HCT116 (cell line): ENCODE measurements at regions of chr4 and their contacts with region 1.

Region 1: DNA sequence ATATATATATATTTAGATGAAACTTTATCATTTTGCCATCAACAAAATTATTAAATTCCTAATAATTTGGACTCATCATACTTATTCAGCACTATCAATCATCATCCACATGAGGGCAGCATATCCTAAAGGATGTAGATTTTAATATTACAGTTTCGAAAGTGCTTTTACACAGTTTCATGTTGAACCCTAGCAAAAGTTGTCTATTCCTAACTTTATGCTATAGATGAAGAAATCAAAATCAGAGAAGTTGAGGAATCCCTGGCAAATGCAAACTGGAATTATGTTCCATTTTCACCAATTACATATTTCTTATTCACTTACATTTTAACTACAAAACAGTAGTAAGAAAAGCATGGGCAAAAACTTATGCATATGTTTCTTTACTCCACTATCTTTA is 36.6 kb upstream of the UGT2A1 start:
- DNase-seq: peak; percentile 6
- ATAC-seq: peak; percentile 63
- H3K4me3 ChIP-seq: no peak overlapping the region
- H3K27ac ChIP-seq: no peak overlapping the region
- H3K4me1 ChIP-seq: no peaks in the 10 kb centered on the region
- H3K27me3 ChIP-seq: no peaks in the 10 kb centered on the region
- CTCF ChIP-seq: peak; percentile 41 to 54 (median 50); a peak in 5 of 6 replicates
- POLR2A ChIP-seq: no peak
- RAD21 ChIP-seq: peak; percentile 76

Region 2: DNA sequence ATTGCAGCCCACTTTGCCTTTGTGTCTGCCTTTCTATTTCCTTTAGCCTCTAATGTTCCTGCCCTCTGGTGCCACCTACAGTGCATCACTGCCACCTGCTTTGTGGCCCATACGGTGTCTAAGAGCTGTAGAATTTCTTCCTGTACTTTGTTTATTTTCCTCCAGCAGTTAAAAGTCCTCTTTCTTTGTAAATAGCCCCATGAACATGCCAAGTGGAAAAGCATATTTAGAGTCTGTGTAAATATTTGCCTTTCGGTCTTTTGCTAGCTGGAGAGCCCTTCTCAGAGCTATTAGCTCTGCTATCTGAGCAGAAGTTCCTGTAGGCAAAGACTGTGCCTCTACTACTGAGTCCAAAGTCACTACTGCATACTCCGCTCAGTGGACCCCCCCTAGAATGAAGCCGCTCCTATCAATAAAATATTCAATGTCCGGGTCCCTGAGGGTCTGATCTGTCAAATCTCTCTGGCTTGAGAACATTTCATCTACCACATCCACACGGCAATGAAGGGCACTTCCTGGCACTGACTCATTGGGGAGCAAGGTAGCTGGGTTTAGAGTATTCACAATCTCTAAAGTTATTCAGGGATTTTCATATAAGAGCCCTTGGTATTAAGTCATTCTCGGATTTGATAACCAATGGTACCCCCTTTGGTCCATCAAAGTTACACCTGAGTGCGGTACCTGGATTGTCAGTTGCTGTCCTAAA is 134.0 kb after region 1 on chr4:
- CTCF ChIA-PET with region 1: interaction called, 3 read pairs
- POLR2A ChIA-PET with region 1: no interaction called
- RAD21 ChIA-PET with region 1: interaction called in 1 of 2 experiments, 3 read pairs
- intact Hi-C with region 1: loop called (anchors 2 kb)
- DNase-seq: peak; percentile 18
- ATAC-seq: peak; percentile 94
- H3K4me3 ChIP-seq: no peak overlapping the region
- H3K27ac ChIP-seq: no peak overlapping the region
- H3K4me1 ChIP-seq: no peaks in the 10 kb centered on the region
- H3K27me3 ChIP-seq: no peaks in the 10 kb centered on the region
- CTCF ChIP-seq: peak; percentile 27 to 69 (median 67); a peak in 5 of 6 replicates
- POLR2A ChIP-seq: no peak
- RAD21 ChIP-seq: peak; percentile 50

Region 3: GRCh38 chr4:69881173-69881773 is 191.7 kb after region 1 on chr4:
- CTCF ChIA-PET with region 1: interaction called, 3 read pairs
- POLR2A ChIA-PET with region 1: no interaction called
- RAD21 ChIA-PET with region 1: no interaction called
- intact Hi-C with region 1: loop called (anchors 1 kb)
- DNase-seq: peak; percentile 22
- ATAC-seq: peak; percentile 78
- H3K4me3 ChIP-seq: no peak overlapping the region
- H3K27ac ChIP-seq: no peak overlapping the region
- H3K4me1 ChIP-seq: no peaks in the 10 kb centered on the region
- H3K27me3 ChIP-seq: no peaks in the 10 kb centered on the region
- CTCF ChIP-seq: peak; percentile 67 to 72 (median 70); a peak in 5 of 6 replicates
- POLR2A ChIP-seq: no peak
- RAD21 ChIP-seq: peak; percentile 86

Region 4: DNA sequence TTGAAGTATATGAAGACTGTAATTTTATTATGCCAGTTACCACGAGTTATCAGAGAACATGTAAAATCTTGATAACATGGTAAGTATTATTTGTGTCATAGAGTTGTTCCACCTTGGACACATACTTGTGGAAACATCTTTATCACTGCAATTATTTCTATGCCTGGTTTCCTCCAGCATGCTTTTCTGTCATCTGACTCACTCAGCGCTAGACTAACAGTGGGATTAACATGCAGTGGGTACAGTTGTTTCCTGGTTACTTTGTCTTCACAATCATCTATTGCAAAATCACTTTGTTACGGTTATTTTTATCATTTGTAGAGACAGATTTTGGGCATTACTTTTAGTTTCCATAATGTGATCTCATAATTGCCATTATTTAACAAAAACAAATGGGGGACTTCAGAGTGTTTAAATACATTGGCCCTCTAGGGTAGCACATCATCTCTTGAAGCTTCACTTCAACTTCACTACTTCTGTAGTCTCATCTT is 306.0 kb after region 1 on chr4 and contains the start of gene STATH:
- CTCF ChIA-PET with region 1: no interaction called
- POLR2A ChIA-PET with region 1: no interaction called
- RAD21 ChIA-PET with region 1: no interaction called
- intact Hi-C with region 1: no loop called
- DNase-seq: no peak
- ATAC-seq: no peak
- H3K4me3 ChIP-seq: no peak within 1 kb of the TSS
- H3K27ac ChIP-seq: no peak within 1 kb of the TSS
- H3K4me1 ChIP-seq: no peaks in the 10 kb centered on the region
- H3K27me3 ChIP-seq: no peaks in the 10 kb centered on the region
- CTCF ChIP-seq: no peak
- POLR2A ChIP-seq: no peak
- RAD21 ChIP-seq: no peak
- total RNA-seq, gene STATH: not detected

Region 5: GRCh38 chr4:70080205-70080604 is 390.6 kb after region 1 on chr4:
- CTCF ChIA-PET with region 1: no interaction called
- POLR2A ChIA-PET with region 1: no interaction called
- RAD21 ChIA-PET with region 1: no interaction called
- intact Hi-C with region 1: no loop called
- DNase-seq: no peak
- ATAC-seq: no peak
- H3K4me3 ChIP-seq: no peak overlapping the region
- H3K27ac ChIP-seq: no peak overlapping the region
- H3K4me1 ChIP-seq: no peaks in the 10 kb centered on the region
- H3K27me3 ChIP-seq: no peaks in the 10 kb centered on the region
- CTCF ChIP-seq: no peak
- POLR2A ChIP-seq: no peak
- RAD21 ChIP-seq: no peak

Region 6: DNA sequence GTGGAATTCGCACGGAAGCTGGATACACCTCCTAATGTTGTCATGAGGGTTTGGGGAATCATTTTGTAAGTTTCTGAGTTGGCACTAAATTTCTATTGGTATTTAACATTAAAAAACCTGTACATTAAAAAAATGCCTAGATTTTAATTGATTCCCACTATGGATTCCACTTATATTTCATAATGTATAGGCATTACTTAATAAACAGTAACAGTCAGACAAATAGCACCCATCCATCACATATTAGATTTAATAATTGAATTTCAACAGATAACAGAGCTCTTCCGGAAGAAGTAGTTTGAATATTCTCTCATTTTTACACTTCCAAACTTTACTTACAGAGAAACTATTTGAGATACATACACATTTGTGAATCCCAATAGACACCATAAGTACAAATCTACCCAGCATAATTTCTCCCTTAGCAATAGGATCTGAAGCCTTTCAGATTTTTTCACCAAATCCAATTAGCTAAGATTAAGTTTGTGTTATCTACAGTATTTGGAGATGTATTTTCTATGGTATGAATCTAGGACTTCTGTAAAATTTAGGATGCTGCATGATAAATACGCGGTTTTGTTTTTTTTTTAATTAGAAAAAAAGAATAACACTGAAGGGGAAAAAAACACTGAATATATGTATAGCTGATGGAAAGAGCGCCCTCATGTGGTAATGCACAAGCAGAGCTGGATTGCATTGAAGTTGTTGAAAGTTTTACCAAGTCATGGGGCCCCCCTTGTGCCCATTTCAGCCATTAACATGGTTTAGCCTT is 493.8 kb after region 1 on chr4:
- CTCF ChIA-PET with region 1: no interaction called
- POLR2A ChIA-PET with region 1: no interaction called
- RAD21 ChIA-PET with region 1: interaction called in 1 of 2 experiments, 3 read pairs
- intact Hi-C with region 1: loop called (anchors 2 kb)
- DNase-seq: peak; percentile 65
- ATAC-seq: peak; percentile 93
- H3K4me3 ChIP-seq: no peak overlapping the region
- H3K27ac ChIP-seq: no peak overlapping the region
- H3K4me1 ChIP-seq: no peaks in the 10 kb centered on the region
- H3K27me3 ChIP-seq: no peaks in the 10 kb centered on the region
- CTCF ChIP-seq: peak; percentile 78 to 88 (median 87)
- POLR2A ChIP-seq: no peak
- RAD21 ChIP-seq: peak; percentile 76

Region 7: GRCh38 chr4:70505151-70505748 is 815.7 kb after region 1 on chr4:
- CTCF ChIA-PET with region 1: no interaction called
- POLR2A ChIA-PET with region 1: no interaction called
- RAD21 ChIA-PET with region 1: no interaction called
- intact Hi-C with region 1: loop called (anchors 2 kb)
- DNase-seq: peak; percentile 42
- ATAC-seq: peak; percentile 93
- H3K4me3 ChIP-seq: no peak overlapping the region
- H3K27ac ChIP-seq: no peak overlapping the region
- H3K4me1 ChIP-seq: no peaks in the 10 kb centered on the region
- H3K27me3 ChIP-seq: no peaks in the 10 kb centered on the region
- CTCF ChIP-seq: peak; percentile 63 to 97 (median 97)
- POLR2A ChIP-seq: no peak
- RAD21 ChIP-seq: peak; percentile 87